Common myeloid progenitor, CD34-positive (primary cell): ENCODE measurements at regions of chr11 and their contacts with region 1.

Region 1: DNA sequence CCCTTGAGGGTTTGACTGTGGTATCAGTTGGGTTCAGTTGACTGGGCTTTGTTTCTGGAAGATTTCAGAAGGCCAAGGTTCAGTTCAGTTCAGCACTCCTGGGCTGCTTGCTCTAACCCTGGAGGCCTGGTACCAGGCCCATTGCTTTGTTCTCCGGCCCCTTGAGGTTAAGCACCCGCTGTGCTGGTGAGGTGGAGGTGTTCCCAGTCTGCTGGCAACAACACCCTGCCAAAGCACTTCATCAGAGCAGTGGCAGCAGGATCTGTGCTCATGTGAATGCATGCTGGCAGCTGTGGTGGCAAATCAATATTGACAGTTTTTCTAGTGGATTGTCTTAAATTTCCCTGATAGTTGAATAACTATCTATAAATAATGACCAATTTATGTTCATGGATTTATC is 3.8 kb upstream of the SCGB1D1 start:
- DNase-seq: no peak
- H3K4me3 ChIP-seq: no peak overlapping the region
- H3K27ac ChIP-seq: no peak overlapping the region
- H3K4me1 ChIP-seq: no peaks in the 10 kb centered on the region
- H3K27me3 ChIP-seq: peaks cover 0 to 18% (median 0%) of the 10 kb centered on the region in 5 experiments

Region 2: DNA sequence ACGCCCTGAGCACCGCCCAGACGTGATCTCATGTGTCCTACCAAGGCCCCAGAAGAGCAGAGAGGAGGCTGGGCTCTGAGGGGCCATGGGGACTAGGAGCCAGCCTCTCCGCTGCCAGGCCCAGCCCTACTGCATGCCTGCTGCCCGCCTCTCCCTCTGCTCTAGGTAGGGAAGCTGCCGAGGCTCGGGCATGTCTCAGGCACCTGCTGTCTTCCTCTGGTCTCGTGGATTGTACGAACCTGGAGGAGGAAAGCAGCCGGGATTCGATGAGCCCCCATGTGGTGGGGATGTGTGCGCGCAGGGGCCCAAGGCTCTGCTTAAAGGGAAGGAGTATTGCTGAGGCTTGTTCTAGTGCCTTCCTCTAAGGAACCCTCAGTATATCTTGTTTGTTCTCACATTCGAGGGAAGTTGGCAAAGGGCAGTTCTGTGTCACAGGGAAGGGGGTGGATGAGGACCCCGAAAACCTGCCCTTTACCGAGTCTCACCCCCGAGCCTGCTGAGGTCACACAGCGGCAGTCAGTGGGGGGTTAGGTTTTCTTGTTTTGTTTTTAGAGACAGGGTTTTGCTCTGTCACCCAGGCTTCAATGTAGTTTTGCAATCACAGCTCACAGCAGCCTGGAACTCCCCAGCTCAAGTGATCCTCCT is 484.8 kb before region 1 on chr11:
- CTCF ChIA-PET with region 1: no interaction called
- POLR2A ChIA-PET with region 1: no interaction called
- DNase-seq: peak; percentile 42 to 68 (median 62)
- H3K4me3 ChIP-seq: no peak overlapping the region
- H3K27ac ChIP-seq: no peak overlapping the region
- H3K4me1 ChIP-seq: peaks cover 10 to 66% (median 50%) of the 10 kb centered on the region in 4 experiments
- H3K27me3 ChIP-seq: no peaks in the 10 kb centered on the region

Region 3: GRCh38 chr11:62169935-62170548 is 16.2 kb before region 1 on chr11:
- CTCF ChIA-PET with region 1: interaction called, 13 read pairs
- POLR2A ChIA-PET with region 1: no interaction called
- DNase-seq: no peak
- H3K4me3 ChIP-seq: no peak overlapping the region
- H3K27ac ChIP-seq: no peak overlapping the region
- H3K4me1 ChIP-seq: peaks cover 0 to 3% (median 0%) of the 10 kb centered on the region in 4 experiments
- H3K27me3 ChIP-seq: peaks cover 2 to 23% (median 5%) of the 10 kb centered on the region in 5 experiments